Dendritic cell treated with granulocyte-macrophage colony-stimulating factor and Interleukin-4, amounts not matched to agents 40 ng/mL and 50 ng/mL, for 4 days (primary cell): ENCODE measurements at regions of chr11 and their contacts with region 1.

Region 1: GRCh38 chr11:10208131-10208575 is 85.9 kb downstream of the SBF2 start:
- H3K4me3 Mint-ChIP-seq: no peak overlapping the region
- H3K27ac Mint-ChIP-seq: no peak overlapping the region
- H3K4me1 Mint-ChIP-seq: peaks cover 10% of the 10 kb centered on the region
- H3K27me3 Mint-ChIP-seq: no peaks in the 10 kb centered on the region

Region 2: DNA sequence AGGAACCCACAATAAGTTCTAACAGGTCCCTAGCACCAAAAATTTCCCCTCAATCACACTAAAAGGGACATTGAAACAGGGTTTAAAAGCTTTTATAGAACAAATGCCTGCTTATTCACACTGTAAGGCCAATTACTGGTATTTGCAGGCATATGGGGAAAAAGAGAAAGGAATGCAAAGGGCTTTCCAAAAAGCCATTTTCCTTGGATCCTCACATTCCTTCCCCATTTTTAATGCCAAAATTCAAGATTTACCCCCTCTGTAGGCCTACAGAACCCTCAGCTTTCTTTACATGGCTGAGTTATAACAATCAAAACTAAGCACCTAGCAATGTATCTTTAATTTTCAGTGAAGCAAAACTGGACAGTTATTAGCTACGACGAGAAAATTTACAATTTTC is 16.1 kb before region 1 on chr11:
- intact Hi-C with region 1: no loop called
- H3K4me3 Mint-ChIP-seq: no peak overlapping the region
- H3K27ac Mint-ChIP-seq: no peak overlapping the region
- H3K4me1 Mint-ChIP-seq: no peaks in the 10 kb centered on the region
- H3K27me3 Mint-ChIP-seq: no peaks in the 10 kb centered on the region

Region 3: DNA sequence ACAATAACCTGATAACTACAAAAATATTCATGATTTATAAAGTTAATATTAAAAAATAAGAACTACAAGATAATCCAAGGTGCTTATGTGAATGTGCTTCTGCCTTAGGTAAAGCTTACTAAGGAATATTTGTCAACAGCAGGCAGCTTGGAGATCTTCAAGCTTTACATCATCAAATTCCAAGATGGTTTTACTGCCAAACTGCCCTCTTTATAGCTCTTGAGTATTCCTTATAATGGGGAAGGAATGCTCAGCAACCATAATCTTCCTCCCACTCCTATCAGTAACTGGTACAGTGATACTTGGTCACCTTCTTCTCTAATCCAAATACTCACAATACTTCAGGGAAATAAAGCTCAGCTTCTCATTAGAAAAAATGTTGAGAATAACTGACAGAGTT is 55.8 kb after region 1 on chr11:
- intact Hi-C with region 1: loop called (anchors 10 kb)
- H3K4me3 Mint-ChIP-seq: no peak overlapping the region
- H3K27ac Mint-ChIP-seq: no peak overlapping the region
- H3K4me1 Mint-ChIP-seq: peaks cover under 1% of the 10 kb centered on the region
- H3K27me3 Mint-ChIP-seq: no peaks in the 10 kb centered on the region